K562 (cell line): ENCODE measurements at regions of chr5 and their contacts with region 1.

Region 1: DNA sequence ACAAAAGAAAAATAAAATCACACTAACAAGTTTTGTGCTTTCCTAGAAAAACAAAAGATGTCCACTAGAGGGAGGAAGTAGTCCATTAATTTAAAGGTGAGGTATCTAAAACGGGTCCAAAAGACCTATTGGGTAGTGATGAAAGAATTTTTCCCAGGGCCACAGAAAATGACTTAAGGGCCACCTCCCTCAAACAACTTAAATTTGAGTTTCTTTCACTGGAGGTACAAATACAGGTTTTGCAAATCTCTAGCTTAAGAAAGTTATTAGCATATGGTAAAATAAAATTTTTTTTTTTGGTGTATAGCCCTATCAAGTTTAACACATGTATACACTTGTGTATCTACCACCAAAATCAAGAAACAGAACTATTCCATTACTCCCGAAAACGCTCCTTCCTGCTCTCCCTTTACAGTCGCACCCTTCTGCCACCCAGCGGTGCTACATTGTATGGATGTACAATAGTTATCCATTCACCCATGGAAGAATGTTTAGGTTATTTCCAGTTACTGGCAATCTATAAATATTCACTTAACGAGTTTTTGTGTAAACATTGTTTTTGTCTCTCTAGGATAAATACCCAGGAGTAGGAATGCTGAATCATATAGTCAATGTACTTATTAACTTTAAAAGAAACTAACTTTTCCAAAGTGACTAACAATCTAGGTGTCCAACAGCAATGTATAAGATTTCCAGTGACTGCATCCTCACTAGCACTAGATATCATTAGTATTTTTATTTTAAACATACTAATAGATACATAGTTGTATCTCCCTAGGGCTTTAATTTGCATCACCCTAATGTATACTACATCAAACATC is 21.9 kb downstream of the DEPDC1B start:
- DNase-seq: peak; percentile 33 to 50 (median 38)
- ATAC-seq: peak; percentile 75
- H3K4me3 ChIP-seq: no peak overlapping the region
- H3K27ac ChIP-seq: no peak overlapping the region
- H3K4me1 ChIP-seq: peaks cover 2 to 4% of the 10 kb centered on the region in 2 experiments; a peak in 2 of 5 replicates
- H3K27me3 ChIP-seq: no peaks in the 10 kb centered on the region
- CTCF ChIP-seq: peak in 2 of 3 experiments; percentile 49 to 68; a peak in 5 of 6 replicates
- EP300 ChIP-seq: no peak
- POLR2A ChIP-seq: no peak
- RAD21 ChIP-seq: peak; percentile 79

Region 2: DNA sequence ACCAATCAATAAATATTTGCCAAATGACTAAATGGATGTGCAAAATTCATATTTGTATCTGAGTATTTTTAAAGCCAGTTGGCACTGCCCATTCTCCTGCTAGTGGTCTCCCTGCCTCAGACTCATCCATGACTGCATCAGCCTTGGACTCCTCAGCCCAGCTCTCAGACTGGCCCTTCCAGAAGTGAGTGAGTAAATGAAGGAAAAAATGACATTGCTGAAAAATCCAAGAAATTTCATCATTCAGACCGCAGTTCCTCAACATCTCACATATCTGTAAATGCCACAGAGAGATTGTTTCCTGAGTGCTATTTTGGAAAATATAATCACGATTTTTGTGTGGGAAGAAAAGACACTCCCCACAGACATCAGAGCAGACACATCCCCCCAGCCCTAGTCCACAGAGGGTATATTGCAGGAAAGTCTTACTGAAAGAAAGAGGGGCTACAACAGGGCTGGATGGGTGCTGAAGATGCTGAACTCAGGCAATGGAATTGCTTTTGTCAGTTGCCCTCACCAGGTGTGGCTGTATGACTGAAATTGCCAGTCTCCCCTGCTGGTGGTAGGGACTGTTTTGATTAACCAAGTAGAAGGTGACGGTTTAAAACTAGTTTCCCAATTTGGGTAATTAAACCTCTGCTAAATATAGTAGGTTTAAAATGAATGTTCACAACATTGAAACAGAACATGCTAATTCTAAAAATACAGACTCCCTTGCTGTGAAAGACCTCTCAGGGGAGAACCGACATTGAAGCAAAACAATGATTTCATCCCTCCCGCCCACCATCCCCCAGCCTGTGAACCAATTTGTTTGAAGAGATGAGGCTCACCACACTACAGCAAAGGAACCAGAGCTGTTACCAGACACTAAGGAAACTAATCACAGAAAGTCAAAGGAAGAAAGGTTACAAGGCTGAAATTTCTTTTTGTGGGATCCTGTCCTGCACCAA is 136.9 kb before region 1 on chr5:
- CTCF ChIA-PET with region 1: no interaction called
- POLR2A ChIA-PET with region 1: no interaction called
- in situ Hi-C with region 1: no loop called
- intact Hi-C with region 1: no loop called
- DNase-seq: no peak
- ATAC-seq: no peak
- H3K4me3 ChIP-seq: no peak overlapping the region
- H3K27ac ChIP-seq: no peak overlapping the region
- H3K4me1 ChIP-seq: no peaks in the 10 kb centered on the region
- H3K27me3 ChIP-seq: no peaks in the 10 kb centered on the region
- CTCF ChIP-seq: no peak
- EP300 ChIP-seq: no peak
- POLR2A ChIP-seq: no peak
- RAD21 ChIP-seq: no peak

Region 3: GRCh38 chr5:60883229-60883628 is 205.2 kb after region 1 on chr5:
- CTCF ChIA-PET with region 1: interaction called, 3 read pairs
- POLR2A ChIA-PET with region 1: no interaction called
- in situ Hi-C with region 1: no loop called
- intact Hi-C with region 1: loop called (anchors 2 kb)
- DNase-seq: peak in 2 of 4 experiments; percentile 6 to 10
- ATAC-seq: no peak
- H3K4me3 ChIP-seq: no peak overlapping the region
- H3K27ac ChIP-seq: no peak overlapping the region
- H3K4me1 ChIP-seq: no peaks in the 10 kb centered on the region
- H3K27me3 ChIP-seq: no peaks in the 10 kb centered on the region
- CTCF ChIP-seq: peak in 2 of 3 experiments; percentile 40 to 43; a peak in 3 of 6 replicates
- EP300 ChIP-seq: no peak
- POLR2A ChIP-seq: no peak
- RAD21 ChIP-seq: peak; percentile 29 to 73; a peak in 2 of 4 replicates

Region 4: DNA sequence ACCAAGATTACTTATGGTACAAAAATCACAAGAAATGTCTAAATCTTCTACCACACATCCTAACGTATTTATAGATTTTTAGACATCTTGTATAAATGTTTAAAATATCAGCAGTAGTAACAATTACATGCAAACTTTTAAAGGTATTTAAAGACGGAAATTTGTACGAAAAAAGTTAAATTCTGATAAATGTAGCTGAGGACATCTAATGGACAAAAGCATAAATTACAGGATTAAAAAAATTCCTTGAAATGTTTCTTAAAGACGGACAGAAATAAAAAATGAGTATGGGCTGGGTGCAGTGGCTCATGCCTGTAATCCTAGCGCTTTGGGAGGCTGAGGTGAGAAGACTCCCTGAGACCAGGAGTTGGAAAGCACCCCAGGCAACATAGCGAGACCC is 251.0 kb after region 1 on chr5:
- CTCF ChIA-PET with region 1: interaction called, 8 read pairs
- POLR2A ChIA-PET with region 1: no interaction called
- in situ Hi-C with region 1: loop called (anchors 25 kb)
- intact Hi-C with region 1: loop called (anchors 5 kb)
- DNase-seq: no peak
- ATAC-seq: no peak
- H3K4me3 ChIP-seq: no peak overlapping the region
- H3K27ac ChIP-seq: no peak overlapping the region
- H3K4me1 ChIP-seq: no peaks in the 10 kb centered on the region
- H3K27me3 ChIP-seq: no peaks in the 10 kb centered on the region
- CTCF ChIP-seq: peak; percentile 11 to 53 (median 17); a peak in 2 of 6 replicates
- EP300 ChIP-seq: no peak
- POLR2A ChIP-seq: no peak
- RAD21 ChIP-seq: peak; percentile 57 to 74

Region 5: GRCh38 chr5:60944904-60945812 is 267.1 kb after region 1 on chr5 and contains the starts of genes ERCC8 and NDUFAF2:
- CTCF ChIA-PET with region 1: no interaction called
- POLR2A ChIA-PET with region 1: no interaction called
- in situ Hi-C with region 1: loop called (anchors 25 kb)
- intact Hi-C with region 1: loop called (anchors 5 kb)
- DNase-seq: peak; percentile 94 to 98 (median 98)
- ATAC-seq: peak; percentile 99
- H3K4me3 ChIP-seq: peak within 1 kb of the TSS; percentile 91
- H3K27ac ChIP-seq: peak within 1 kb of the TSS; percentile 80
- H3K4me1 ChIP-seq: peaks cover 0 to 4% of the 10 kb centered on the region in 2 experiments; a peak in 2 of 5 replicates
- H3K27me3 ChIP-seq: no peaks in the 10 kb centered on the region
- CTCF ChIP-seq: no peak
- EP300 ChIP-seq: no peak
- POLR2A ChIP-seq: peak; percentile 87
- RAD21 ChIP-seq: no peak
- polyA plus RNA-seq, gene ERCC8: 37.1 to 39.4 TPM
- polyA plus RNA-seq, gene NDUFAF2: 140 to 155 TPM

Region 6: DNA sequence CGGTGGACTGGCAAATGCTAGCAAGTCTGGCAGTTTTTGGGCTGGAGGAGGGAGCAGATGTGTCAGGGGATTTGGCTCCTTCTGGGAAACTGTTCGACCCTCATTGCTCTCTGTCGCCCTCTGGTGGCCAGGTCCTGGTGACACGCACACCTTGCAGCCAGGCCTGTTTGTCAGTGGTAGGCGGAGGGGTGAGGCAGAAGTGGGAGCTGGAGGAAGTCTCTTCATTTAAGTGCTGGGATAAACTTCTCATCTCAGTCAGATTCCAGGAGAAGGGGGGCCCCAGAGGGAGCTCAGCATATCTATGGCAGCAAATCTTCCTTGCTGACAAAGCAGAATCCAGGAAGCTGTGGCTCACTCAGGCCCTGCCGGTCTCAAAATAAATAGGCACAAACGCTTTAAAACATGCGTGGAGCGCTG is 980.5 kb after region 1 on chr5:
- CTCF ChIA-PET with region 1: no interaction called
- POLR2A ChIA-PET with region 1: no interaction called
- in situ Hi-C with region 1: no loop called
- intact Hi-C with region 1: loop called (anchors 5 kb)
- DNase-seq: peak; percentile 71 to 86 (median 82)
- ATAC-seq: peak; percentile 97
- H3K4me3 ChIP-seq: no peak overlapping the region
- H3K27ac ChIP-seq: no peak overlapping the region
- H3K4me1 ChIP-seq: no peaks in the 10 kb centered on the region
- H3K27me3 ChIP-seq: peaks cover 10 to 37% of the 10 kb centered on the region in 2 experiments; a peak in 4 of 5 replicates
- CTCF ChIP-seq: peak; percentile 80 to 93 (median 83)
- EP300 ChIP-seq: no peak
- POLR2A ChIP-seq: no peak
- RAD21 ChIP-seq: peak; percentile 68 to 83